T-cell (primary cell): ENCODE measurements at regions of chr13 and their contacts with region 1.

Region 1: DNA sequence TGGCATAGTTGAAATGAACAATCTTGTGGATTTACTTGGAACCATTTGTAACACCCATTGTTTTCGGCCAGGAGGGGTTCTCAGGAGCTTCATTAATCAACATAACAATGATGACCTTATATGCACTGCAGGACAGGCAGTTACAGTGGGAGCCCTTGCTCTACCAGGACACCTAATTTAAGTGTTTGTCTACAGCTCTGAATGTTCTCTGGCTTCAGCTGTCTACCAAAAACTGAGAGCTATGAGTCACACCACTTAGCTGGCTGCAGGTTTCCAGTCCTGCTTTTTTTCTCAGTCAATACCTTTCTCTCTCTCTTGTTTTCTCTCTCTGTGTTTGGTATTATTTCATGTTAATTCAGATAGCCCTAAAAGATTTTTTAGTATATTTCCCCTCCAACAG is 105.4 kb upstream of the MBNL2 start:
- DNase-seq: no peak
- ATAC-seq: no peak
- H3K4me3 ChIP-seq: no peak overlapping the region
- H3K4me3 Mint-ChIP-seq: no peak overlapping the region
- H3K27ac ChIP-seq: no peak overlapping the region
- H3K27ac Mint-ChIP-seq: no peak overlapping the region
- H3K4me1 ChIP-seq: peaks cover 0 to 5% of the 10 kb centered on the region in 2 experiments
- H3K4me1 Mint-ChIP-seq: peaks cover 6 to 17% (median 7%) of the 10 kb centered on the region in 3 donors
- H3K27me3 ChIP-seq: peaks cover 5 to 9% of the 10 kb centered on the region in 2 experiments
- H3K27me3 Mint-ChIP-seq: peaks cover 8 to 20% of the 10 kb centered on the region in 2 donors

Region 2: DNA sequence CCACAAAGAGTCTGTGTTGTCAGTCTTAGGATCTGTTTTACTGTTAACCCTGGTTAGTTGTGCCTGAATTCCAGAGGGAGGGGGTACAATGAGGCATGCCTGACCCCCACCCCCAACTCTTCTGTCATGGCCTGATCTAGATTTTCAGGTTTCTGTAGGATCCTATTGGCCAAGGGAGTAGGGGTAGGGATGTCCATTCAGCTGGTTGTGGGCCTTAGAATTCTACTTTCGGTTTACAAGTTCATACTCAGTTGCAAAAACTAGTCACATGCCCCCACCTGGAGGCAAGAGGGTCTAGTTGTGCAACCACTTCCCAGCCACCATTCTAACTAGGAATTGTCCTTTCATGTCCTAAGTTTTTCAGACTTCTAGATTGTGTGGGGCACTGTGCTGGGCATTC is 11.1 kb after region 1 on chr13:
- CTCF ChIA-PET with region 1: no interaction called
- POLR2A ChIA-PET with region 1: no interaction called
- DNase-seq: no peak
- ATAC-seq: no peak
- H3K4me3 ChIP-seq: no peak overlapping the region
- H3K4me3 Mint-ChIP-seq: no peak overlapping the region
- H3K27ac ChIP-seq: no peak overlapping the region
- H3K27ac Mint-ChIP-seq: no peak overlapping the region
- H3K4me1 ChIP-seq: no peaks in the 10 kb centered on the region
- H3K4me1 Mint-ChIP-seq: no peaks in the 10 kb centered on the region
- H3K27me3 ChIP-seq: peaks cover 0 to 14% of the 10 kb centered on the region in 2 experiments
- H3K27me3 Mint-ChIP-seq: peaks cover 12 to 24% of the 10 kb centered on the region in 2 donors

Region 3: DNA sequence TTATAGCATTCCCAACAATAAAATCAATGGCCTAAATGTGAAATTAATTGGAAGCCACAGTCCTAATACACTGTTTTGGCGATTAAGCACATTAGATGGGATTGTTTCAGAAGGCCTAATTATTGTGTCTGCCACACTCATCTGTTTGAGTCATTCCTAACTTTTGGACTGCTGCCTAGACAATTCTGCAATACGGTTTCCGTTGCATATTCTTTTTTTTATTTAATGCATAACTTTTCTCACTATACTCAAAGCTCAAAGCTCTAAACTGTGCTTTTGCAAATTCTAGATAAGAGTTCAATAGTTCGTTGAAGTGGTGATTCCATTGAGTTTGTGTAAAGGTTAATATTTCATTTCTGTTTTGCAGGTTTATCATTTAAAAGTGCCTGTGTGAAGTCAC is 158.5 kb after region 1 on chr13:
- CTCF ChIA-PET with region 1: no interaction called
- POLR2A ChIA-PET with region 1: no interaction called
- DNase-seq: no peak
- ATAC-seq: no peak
- H3K4me3 ChIP-seq: no peak overlapping the region
- H3K4me3 Mint-ChIP-seq: no peak overlapping the region
- H3K27ac ChIP-seq: no peak overlapping the region
- H3K27ac Mint-ChIP-seq: no peak overlapping the region
- H3K4me1 ChIP-seq: peaks cover 0 to 2% of the 10 kb centered on the region in 2 experiments
- H3K4me1 Mint-ChIP-seq: peaks cover 36 to 71% (median 60%) of the 10 kb centered on the region in 3 donors
- H3K27me3 ChIP-seq: no peaks in the 10 kb centered on the region
- H3K27me3 Mint-ChIP-seq: no peaks in the 10 kb centered on the region

Region 4: GRCh38 chr13:97328222-97328790 is 211.6 kb after region 1 on chr13:
- CTCF ChIA-PET with region 1: interaction called, 7 to 14 read pairs
- POLR2A ChIA-PET with region 1: no interaction called
- DNase-seq: no peak
- ATAC-seq: no peak
- H3K4me3 ChIP-seq: no peak overlapping the region
- H3K4me3 Mint-ChIP-seq: no peak overlapping the region
- H3K27ac ChIP-seq: no peak overlapping the region
- H3K27ac Mint-ChIP-seq: no peak overlapping the region
- H3K4me1 ChIP-seq: no peaks in the 10 kb centered on the region
- H3K4me1 Mint-ChIP-seq: peaks cover 21 to 30% (median 27%) of the 10 kb centered on the region in 3 donors
- H3K27me3 ChIP-seq: no peaks in the 10 kb centered on the region
- H3K27me3 Mint-ChIP-seq: no peaks in the 10 kb centered on the region